Sigmoid colon (tissue), 7 donors: ENCODE measurements at regions of chr16 and their contacts with region 1.

Region 1: DNA sequence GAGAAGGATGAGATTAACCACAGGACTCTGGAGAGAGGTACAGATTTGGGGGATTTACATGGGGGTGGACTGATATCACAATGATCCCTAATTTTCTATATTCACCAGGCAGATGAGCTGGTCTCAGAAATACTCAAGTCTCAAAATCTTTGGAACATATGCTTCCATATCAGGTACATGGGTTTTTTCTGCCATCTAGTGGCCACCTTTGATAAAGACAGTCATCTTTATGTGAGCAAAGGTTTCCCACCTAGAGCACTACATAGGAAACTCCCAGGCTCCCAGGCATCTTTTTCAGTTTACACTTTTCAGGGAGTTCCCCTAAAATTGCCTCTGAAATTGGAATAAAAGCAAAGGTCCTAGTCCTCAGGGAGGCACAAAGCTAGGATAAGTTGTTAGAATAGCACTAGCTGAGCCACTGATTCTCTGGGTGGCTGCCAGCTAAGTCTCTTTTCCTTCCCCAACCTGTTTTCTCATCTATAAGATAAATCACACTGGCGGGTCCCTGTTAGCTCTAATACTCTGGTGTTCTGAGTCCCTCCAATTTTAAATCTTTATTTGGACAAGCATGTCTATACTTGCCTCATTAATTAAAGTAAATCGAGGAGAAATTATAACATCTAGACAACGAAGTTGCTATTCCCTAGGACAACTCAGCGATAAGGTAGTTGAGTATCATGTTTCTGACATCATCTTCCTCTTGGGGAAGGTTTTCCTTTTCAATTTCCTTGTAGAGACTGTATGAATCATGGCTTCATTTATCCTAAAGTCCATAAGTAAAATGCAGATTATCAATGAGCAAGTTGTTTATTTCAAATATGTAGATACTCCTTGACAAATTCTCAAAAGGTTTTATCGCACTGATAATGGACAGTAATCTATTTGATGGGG is 19.0 kb upstream of the MON1B start:
- DNase-seq: no peak
- H3K4me3 ChIP-seq: no peak overlapping the region
- H3K27ac ChIP-seq: no peak overlapping the region
- H3K4me1 ChIP-seq: no peaks in the 10 kb centered on the region
- H3K27me3 ChIP-seq: peaks cover 0 to 19% (median 8%) of the 10 kb centered on the region in 3 donors
- CTCF ChIP-seq: peak; percentile 21 to 72 (median 52)
- EP300 ChIP-seq: no peak
- POLR2A ChIP-seq: no peak

Region 2: DNA sequence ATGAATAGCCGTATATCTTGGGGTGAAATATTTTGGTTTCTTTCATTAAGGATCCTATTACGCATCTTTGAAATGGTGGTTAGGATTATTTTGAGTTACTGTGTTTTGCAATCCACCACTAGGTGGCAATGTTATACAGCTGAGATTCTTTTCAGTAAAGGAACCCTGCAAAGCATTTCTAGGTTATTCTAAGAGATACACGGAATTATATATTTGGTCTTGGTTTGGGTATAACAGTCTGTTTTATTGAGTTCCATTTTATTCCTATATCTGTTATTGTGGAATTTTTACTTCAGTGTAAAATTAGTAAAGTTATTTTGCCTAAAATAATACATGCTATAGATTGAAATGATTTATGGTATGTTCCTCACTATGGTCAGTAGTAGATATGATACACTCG is 1382.8 kb before region 1 on chr16:
- intact Hi-C with region 1: loop called (anchors 2 kb)
- DNase-seq: no peak
- H3K4me3 ChIP-seq: no peak overlapping the region
- H3K27ac ChIP-seq: no peak overlapping the region
- H3K4me1 ChIP-seq: no peaks in the 10 kb centered on the region
- H3K27me3 ChIP-seq: peaks cover 0 to 25% (median 2%) of the 10 kb centered on the region in 3 donors
- CTCF ChIP-seq: peak; percentile 15 to 82 (median 64)
- EP300 ChIP-seq: no peak
- POLR2A ChIP-seq: no peak